ENCODE measurements at regions of chr19 and their contacts with region 1.

Region 1: GRCh38 chr19:2686360-2686759 is 16.1 kb downstream of the GNG7 start:
- DNase-seq: no peak

Region 2: GRCh38 chr19:2653710-2654707 is 32.4 kb before region 1 on chr19:
- intact Hi-C with region 1: loop called in 1 of 2 experiments (anchors 5 kb)
- DNase-seq: no peak

Measured in posterior vena cava (tissue), 2 donors.